Activated B cell treated with CpG ODN at 0.5 μM for 24 hours (primary cell): ENCODE measurements at regions of chr20 and their contacts with region 1.

Region 1: GRCh38 chr20:35994994-35995453 is 26.6 kb downstream of the CNBD2 start:
- DNase-seq: peak; percentile 72
- ATAC-seq: peak; percentile 85
- H3K4me3 Mint-ChIP-seq: no peak overlapping the region
- H3K27ac Mint-ChIP-seq: no peak overlapping the region
- H3K4me1 Mint-ChIP-seq: peaks cover 5% of the 10 kb centered on the region
- H3K27me3 Mint-ChIP-seq: peaks cover 7% of the 10 kb centered on the region
- CTCF ChIP-seq: peak; percentile 25

Region 2: DNA sequence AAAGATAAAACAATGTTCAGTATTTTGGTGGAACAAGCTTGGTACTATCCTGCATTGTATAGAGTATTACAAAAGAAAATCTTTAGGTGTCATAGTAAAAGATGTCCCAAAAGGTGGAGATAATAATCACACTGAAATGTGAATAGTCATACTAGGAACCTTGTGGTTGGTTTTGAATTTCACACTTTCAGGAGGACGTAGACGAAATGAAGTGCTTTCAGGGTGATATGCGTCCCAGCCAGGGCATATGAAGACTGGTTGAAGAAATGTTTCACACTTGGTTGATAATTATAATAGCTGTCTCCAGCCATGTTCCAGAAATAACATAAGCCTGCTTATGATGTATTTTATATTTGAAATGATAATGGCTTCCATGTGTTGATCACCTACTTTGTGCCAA is 101.1 kb before region 1 on chr20:
- CTCF ChIA-PET with region 1: no interaction called
- POLR2A ChIA-PET with region 1: no interaction called
- intact Hi-C with region 1: no loop called
- DNase-seq: no peak
- ATAC-seq: peak; percentile 49
- H3K4me3 Mint-ChIP-seq: no peak overlapping the region
- H3K27ac Mint-ChIP-seq: no peak overlapping the region
- H3K4me1 Mint-ChIP-seq: peaks cover 20% of the 10 kb centered on the region
- H3K27me3 Mint-ChIP-seq: no peaks in the 10 kb centered on the region
- CTCF ChIP-seq: no peak

Region 3: GRCh38 chr20:35947907-35948306 is 47.1 kb before region 1 on chr20:
- CTCF ChIA-PET with region 1: no interaction called
- POLR2A ChIA-PET with region 1: no interaction called
- intact Hi-C with region 1: no loop called
- DNase-seq: no peak
- ATAC-seq: no peak
- H3K4me3 Mint-ChIP-seq: no peak overlapping the region
- H3K27ac Mint-ChIP-seq: no peak overlapping the region
- H3K4me1 Mint-ChIP-seq: peaks cover 9% of the 10 kb centered on the region
- H3K27me3 Mint-ChIP-seq: no peaks in the 10 kb centered on the region
- CTCF ChIP-seq: no peak

Region 4: GRCh38 chr20:35981969-35982368 is 13.1 kb before region 1 on chr20:
- CTCF ChIA-PET with region 1: interaction called, 13 read pairs
- POLR2A ChIA-PET with region 1: no interaction called
- intact Hi-C with region 1: no loop called
- DNase-seq: no peak
- ATAC-seq: no peak
- H3K4me3 Mint-ChIP-seq: no peak overlapping the region
- H3K27ac Mint-ChIP-seq: no peak overlapping the region
- H3K4me1 Mint-ChIP-seq: no peaks in the 10 kb centered on the region
- H3K27me3 Mint-ChIP-seq: peaks cover 6% of the 10 kb centered on the region
- CTCF ChIP-seq: no peak

Region 5: DNA sequence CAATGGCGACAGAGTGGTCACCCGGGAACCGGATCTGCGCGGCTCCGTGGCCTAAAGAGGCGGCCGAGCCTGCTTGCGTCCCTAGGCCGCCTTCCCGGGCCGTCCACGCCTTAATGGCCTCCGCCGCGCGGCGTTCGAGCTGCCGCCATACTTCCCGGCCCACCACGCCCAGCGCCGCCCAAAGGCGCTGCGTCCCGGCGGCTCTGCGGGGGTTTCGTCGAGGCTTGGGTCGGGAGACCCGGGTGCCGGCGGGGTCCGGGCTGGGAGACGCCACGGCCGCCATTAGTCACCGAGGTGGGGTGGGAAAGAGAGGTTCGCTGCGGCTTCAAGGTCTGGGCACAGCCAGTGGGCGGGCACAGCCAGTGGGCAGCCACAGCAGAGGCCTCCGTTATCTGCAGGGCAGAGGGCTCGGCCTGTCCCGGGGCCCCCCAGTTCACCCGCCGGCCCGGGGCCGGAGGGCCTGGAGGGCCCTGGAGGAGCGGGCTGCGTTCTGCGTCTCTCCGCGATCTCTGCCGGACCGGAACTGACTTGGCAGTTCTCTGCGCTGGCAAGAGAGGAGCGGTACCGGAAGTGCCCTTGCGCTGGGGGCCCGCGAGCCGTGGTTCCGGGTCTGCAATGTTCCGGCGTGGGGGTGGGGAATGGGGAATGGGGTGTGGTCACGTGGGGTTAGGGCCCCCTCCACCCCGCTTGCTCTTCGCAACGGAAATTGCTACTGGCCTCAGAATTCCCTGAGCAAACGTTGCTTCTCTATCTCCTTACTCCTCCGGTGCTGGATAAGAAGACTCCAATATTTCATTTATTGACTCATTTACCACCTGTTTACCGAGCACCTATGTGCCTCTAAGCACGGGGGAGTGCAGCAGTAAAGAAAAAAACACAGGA is 55.7 kb after region 1 on chr20:
- CTCF ChIA-PET with region 1: interaction called, 3 read pairs
- POLR2A ChIA-PET with region 1: no interaction called
- intact Hi-C with region 1: loop called (anchors 5 kb)
- DNase-seq: peak; percentile 80
- ATAC-seq: peak; percentile 94
- H3K4me3 Mint-ChIP-seq: peak overlapping the region; percentile 86
- H3K27ac Mint-ChIP-seq: peak overlapping the region; percentile 91
- H3K4me1 Mint-ChIP-seq: peaks cover 54% of the 10 kb centered on the region
- H3K27me3 Mint-ChIP-seq: no peaks in the 10 kb centered on the region
- CTCF ChIP-seq: no peak

Region 6: DNA sequence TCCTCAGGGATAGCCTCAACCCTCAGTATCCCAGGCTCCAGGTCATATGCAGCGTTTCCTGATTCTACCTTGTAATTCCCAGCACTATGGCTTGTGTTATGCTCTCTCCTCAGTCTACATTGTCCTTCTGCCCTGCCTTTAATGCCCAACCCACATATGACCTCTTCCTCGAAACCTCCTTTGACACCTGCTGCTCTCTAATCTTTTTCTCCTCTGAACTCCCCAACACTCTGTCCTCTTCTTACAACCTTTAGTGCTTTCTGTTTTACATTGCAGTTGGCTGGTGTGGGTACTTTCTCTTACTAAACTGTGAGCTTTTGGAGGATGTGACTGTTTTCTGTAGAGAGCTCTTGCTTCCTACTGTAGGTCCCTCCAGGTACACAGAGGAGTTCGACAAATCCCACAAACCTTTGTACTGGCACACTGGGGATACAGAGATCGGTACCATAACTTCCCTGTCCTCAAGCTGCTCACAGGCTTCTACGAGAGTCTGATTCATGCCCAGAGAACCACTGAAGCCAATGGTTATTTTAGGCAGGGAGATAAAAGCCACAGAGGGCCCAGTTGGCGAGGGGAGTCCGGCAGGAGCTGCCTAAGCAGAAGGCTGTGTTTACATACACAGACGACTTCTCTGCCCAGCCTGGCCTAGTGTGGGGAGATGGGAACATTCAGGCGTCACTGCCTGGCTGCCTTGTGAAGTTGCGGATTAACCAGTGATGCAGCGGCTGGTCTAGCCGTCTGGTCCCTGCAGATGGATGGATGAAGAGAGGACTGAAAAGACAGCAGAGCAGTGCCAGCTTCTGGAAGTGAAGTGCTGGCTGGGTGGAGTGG is 151.1 kb after region 1 on chr20:
- CTCF ChIA-PET with region 1: interaction called, 488 read pairs
- POLR2A ChIA-PET with region 1: interaction called, 3 read pairs
- intact Hi-C with region 1: no loop called
- DNase-seq: no peak
- ATAC-seq: no peak
- H3K4me3 Mint-ChIP-seq: no peak overlapping the region
- H3K27ac Mint-ChIP-seq: no peak overlapping the region
- H3K4me1 Mint-ChIP-seq: peaks cover 14% of the 10 kb centered on the region
- H3K27me3 Mint-ChIP-seq: peaks cover 8% of the 10 kb centered on the region
- CTCF ChIP-seq: no peak

Region 7: GRCh38 chr20:36439040-36439730 is 444.2 kb after region 1 on chr20:
- CTCF ChIA-PET with region 1: no interaction called
- POLR2A ChIA-PET with region 1: no interaction called
- intact Hi-C with region 1: loop called (anchors 1 kb)
- DNase-seq: peak; percentile 58
- ATAC-seq: peak; percentile 48
- H3K4me3 Mint-ChIP-seq: no peak overlapping the region
- H3K27ac Mint-ChIP-seq: no peak overlapping the region
- H3K4me1 Mint-ChIP-seq: peaks cover 10% of the 10 kb centered on the region
- H3K27me3 Mint-ChIP-seq: peaks cover 4% of the 10 kb centered on the region
- CTCF ChIP-seq: no peak